Endothelial cell of umbilical vein (primary cell): ENCODE measurements at regions of chr12 and their contacts with region 1.

Region 1: DNA sequence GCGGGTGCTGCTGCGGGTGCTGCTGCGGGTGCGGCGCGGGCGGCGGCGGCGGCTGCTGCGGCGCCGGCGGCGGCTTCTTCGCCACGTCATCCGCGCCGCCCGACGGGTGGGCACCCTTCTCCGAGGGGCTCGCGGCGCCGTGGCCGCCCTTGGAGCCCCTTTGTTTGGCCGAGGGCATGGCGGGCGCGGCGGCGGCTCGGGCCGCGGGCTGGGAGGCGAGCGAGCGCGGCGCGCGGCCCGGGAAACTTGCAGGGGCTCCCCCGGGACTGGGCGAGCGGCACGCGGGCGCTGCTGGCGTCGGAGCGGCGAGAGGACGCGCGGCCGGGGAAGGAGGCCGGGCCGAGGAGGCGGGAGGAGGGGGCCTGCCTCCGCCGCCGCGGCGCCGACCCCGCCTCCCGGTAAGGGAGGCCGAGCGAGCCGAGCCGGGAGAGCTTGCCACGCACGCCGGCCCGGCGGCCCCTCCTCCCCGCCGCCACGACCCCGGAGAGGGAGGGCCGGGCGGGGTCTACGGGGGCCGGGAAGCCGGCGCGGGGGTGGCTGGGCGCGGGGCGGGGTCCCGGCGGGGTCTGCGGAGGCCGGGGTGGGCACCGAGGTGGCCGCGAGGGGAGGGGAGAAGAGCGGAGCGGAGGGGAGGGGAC is at the start of gene CKAP4:
- DNase-seq: peak; percentile 74
- H3K4me3 ChIP-seq: peak within 1 kb of the TSS; percentile 72 to 97 (median 90)
- H3K27ac ChIP-seq: peak within 1 kb of the TSS; percentile 90
- H3K4me1 ChIP-seq: peaks cover 27% of the 10 kb centered on the region
- H3K27me3 ChIP-seq: no peaks in the 10 kb centered on the region
- CTCF ChIP-seq: no peak
- POLR2A ChIP-seq: no peak
- total RNA-seq, gene CKAP4: 223 and 249 TPM in 2 replicates

Region 2: GRCh38 chr12:106282457-106283097 is 34.8 kb after region 1 on chr12:
- CTCF ChIA-PET with region 1: interaction called, 27 read pairs
- POLR2A ChIA-PET with region 1: no interaction called
- dilution Hi-C with region 1: no loop called
- intact Hi-C with region 1: loop called (anchors 2 kb)
- DNase-seq: peak; percentile 48
- H3K4me3 ChIP-seq: no peak overlapping the region
- H3K27ac ChIP-seq: no peak overlapping the region
- H3K4me1 ChIP-seq: peaks cover 6% of the 10 kb centered on the region
- H3K27me3 ChIP-seq: peaks cover 4 to 9% of the 10 kb centered on the region in 2 experiments
- CTCF ChIP-seq: peak; percentile 65 to 70
- POLR2A ChIP-seq: no peak

Region 3: GRCh38 chr12:106302401-106303201 is 54.8 kb after region 1 on chr12 and contains the start of gene TCP11L2:
- CTCF ChIA-PET with region 1: no interaction called
- POLR2A ChIA-PET with region 1: no interaction called
- dilution Hi-C with region 1: no loop called
- intact Hi-C with region 1: loop called (anchors 1 kb)
- DNase-seq: peak; percentile 79
- H3K4me3 ChIP-seq: peak within 1 kb of the TSS; percentile 62 to 83 (median 73)
- H3K27ac ChIP-seq: peak within 1 kb of the TSS; percentile 98
- H3K4me1 ChIP-seq: peaks cover 14% of the 10 kb centered on the region
- H3K27me3 ChIP-seq: peaks cover 0 to 1% of the 10 kb centered on the region in 2 experiments
- CTCF ChIP-seq: no peak
- POLR2A ChIP-seq: no peak
- total RNA-seq, gene TCP11L2: 15.3 and 18.7 TPM in 2 replicates

Region 4: DNA sequence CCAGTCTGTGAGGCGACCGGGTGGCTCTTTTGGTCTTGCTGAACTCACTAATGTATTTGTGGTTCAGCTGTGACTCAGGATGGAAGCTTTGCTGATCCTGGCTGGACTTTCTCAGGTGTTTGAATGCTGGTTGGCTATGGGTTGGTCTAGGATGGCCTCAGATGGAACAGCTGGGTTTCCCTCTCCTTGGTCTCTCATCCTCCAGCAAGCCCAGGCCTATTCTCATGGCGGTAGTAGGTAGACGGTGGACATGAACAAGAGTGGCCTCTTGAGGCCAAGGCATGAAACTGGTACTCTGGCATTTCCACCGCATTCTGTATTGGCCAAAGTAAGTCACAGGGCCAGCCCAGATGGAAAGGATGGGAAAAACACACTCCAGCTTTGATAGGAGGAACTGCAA is 97.9 kb after region 1 on chr12:
- CTCF ChIA-PET with region 1: interaction called, 4 read pairs
- POLR2A ChIA-PET with region 1: no interaction called
- dilution Hi-C with region 1: no loop called
- intact Hi-C with region 1: loop called (anchors 1 kb)
- DNase-seq: peak; percentile 67
- H3K4me3 ChIP-seq: no peak overlapping the region
- H3K27ac ChIP-seq: no peak overlapping the region
- H3K4me1 ChIP-seq: no peaks in the 10 kb centered on the region
- H3K27me3 ChIP-seq: peaks cover 3 to 5% of the 10 kb centered on the region in 2 experiments
- CTCF ChIP-seq: peak; percentile 33 to 54
- POLR2A ChIP-seq: no peak

Region 5: GRCh38 chr12:106774005-106774807 is 526.4 kb after region 1 on chr12 and contains the start of gene RIC8B:
- CTCF ChIA-PET with region 1: no interaction called
- POLR2A ChIA-PET with region 1: no interaction called
- dilution Hi-C with region 1: no loop called
- intact Hi-C with region 1: loop called (anchors 5 kb)
- DNase-seq: peak; percentile 99
- H3K4me3 ChIP-seq: peak within 1 kb of the TSS; percentile 52 to 84 (median 74)
- H3K27ac ChIP-seq: peak within 1 kb of the TSS; percentile 91
- H3K4me1 ChIP-seq: peaks cover 12% of the 10 kb centered on the region
- H3K27me3 ChIP-seq: no peaks in the 10 kb centered on the region
- CTCF ChIP-seq: peak in 1 of 2 donors; percentile 2
- POLR2A ChIP-seq: peak; percentile 91
- total RNA-seq, gene RIC8B: 13.7 and 16.5 TPM in 2 replicates